ENCODE measurements at regions of chr6 and their contacts with region 1.

Region 1: GRCh38 chr6:49625140-49625539 is 11.5 kb downstream of the RHAG start:
- DNase-seq: no peak
- ATAC-seq: no peak
- H3K4me3 ChIP-seq: no peak overlapping the region
- H3K27ac ChIP-seq: no peak overlapping the region
- H3K4me1 ChIP-seq: no peaks in the 10 kb centered on the region
- H3K27me3 ChIP-seq: no peaks in the 10 kb centered on the region
- CTCF ChIP-seq: no peak

Region 2: DNA sequence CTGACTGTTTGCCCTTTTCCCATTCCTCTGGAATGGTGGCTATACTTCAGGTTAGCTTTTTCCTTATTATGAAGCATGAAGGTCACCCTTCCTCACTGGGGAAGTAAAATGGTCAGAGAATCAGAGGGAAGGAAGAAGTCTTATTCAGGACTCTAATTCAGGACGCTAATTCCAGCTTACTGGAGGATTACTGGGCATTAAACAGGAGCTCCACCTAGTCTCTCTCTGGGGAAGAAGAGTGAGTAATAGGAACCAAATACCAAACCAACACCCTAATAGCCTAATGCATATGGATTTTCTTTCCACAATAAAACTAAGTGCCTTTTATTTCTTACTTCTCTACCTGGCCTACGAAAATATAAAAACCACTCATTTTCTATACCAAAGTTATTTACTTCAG is 231.1 kb after region 1 on chr6:
- intact Hi-C with region 1: loop called (anchors 10 kb)
- DNase-seq: no peak
- ATAC-seq: no peak
- H3K4me3 ChIP-seq: no peak overlapping the region
- H3K27ac ChIP-seq: no peak overlapping the region
- H3K4me1 ChIP-seq: no peaks in the 10 kb centered on the region
- H3K27me3 ChIP-seq: no peaks in the 10 kb centered on the region
- CTCF ChIP-seq: no peak

Measured in lower lobe of right lung (tissue), 2 donors.